ENCODE measurements at regions of chr18 and their contacts with region 1.

Region 1: DNA sequence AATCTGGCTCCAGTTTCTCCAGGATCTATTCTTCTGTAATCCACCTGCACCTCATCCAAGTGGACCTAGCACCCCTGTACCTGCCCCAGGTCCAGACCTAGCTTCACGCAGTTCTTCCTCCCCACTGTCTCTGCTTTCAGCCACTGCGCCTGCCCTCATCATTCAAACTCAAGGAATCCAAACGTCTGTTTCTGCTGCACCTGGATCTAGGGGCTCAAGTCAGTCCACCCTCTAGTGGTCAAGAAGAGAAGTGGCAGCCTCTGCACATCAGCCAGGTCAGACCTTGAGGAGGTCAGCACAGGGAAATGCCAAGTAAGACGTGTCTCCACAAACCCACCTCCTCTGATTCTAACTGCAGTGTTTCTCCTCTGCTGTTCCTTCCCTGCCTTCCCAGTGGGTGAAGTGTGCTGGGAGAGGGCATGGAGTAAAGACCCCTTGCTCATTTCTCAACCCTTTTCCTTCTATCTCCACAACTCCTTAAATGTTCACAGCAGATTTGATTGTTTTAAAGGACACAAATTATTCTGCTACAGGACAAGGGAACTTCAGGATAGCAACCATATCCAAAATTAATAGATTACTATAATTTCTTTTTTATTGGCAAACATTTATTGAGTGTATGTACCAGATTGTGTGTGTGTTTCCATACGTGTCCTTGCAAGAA is 8.6 kb upstream of the RNF152 start:
- DNase-seq: no peak
- ATAC-seq: peak; percentile 62 to 90

Region 2: GRCh38 chr18:61551586-61551985 is 349.9 kb before region 1 on chr18:
- intact Hi-C with region 1: loop called in 1 of 2 experiments (anchors 10 kb)
- DNase-seq: no peak
- ATAC-seq: peak; percentile 70 to 82

Region 3: DNA sequence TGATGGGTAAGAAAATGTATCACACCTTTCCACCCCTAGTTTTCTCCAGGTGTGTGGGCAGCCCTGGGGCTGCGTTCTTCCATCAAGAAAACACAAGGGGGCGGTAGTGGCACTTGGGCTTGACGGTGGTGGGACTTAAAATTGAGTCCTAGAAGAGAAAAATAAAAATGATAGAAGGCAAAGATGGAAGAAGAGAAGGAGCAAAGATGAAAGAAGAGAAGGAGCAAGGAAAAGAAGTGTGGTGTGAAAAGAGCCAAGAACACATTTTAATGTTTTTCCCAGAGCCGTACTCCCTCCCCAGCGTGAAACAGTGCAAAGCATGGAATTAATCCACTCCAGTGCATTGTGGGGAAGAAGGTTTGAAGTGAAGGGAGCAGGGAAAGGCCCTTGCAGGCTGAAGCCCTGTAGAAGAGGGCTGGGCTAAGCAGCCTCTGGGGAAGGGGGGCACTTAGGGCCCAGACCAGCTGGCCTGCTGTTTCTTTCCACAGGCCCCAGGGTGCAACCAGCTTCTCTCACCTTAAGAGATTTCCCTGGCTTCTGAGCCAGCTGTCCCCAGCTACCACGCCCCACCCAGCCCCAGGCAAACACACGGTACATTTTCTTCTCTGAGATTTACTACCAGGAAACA is 265.4 kb before region 1 on chr18:
- intact Hi-C with region 1: loop called (anchors 2 to 5 kb)
- DNase-seq: peak; percentile 44
- ATAC-seq: peak; percentile 82 to 88

Region 4: GRCh38 chr18:62018034-62018758 is 116.7 kb after region 1 on chr18:
- intact Hi-C with region 1: no loop called
- DNase-seq: peak; percentile 45
- ATAC-seq: peak; percentile 92 to 96